ENCODE measurements at regions of chr2 and their contacts with region 1.

Region 1: DNA sequence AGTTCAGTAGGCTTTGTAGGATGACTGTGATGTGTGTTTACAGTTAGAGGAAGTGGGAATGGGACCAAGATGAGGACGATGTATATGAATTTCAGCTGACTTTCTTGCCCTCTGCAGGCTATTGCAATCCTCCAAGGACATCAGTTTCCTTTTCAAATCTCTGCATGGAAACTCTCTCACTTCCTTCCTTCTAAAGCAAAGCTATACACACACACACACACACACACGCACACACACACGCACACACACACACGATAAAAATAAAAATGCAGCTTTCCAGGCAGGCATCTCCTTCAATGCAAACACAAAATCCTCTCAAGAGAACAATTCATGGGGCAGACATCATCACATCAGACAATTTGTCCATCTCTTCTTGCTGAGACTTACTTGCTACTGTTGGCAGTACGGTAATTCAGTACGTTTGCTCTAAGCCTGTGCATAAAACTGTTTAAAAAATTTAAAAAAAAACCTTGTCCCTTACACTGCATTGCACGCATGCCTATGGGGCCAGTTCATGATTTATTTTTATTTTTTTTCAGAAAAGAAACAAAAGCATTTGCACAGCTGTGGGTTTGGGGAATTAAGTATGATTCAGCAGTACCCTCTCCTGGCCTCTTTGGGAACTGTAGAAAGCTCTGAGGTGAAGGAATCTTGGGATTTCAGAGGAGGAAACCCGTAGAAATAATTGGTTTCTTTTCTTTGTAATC is 27.1 kb upstream of the ICOS start:
- DNase-seq: peak; percentile 21
- H3K4me3 ChIP-seq: peak overlapping the region in 2 of 3 experiments; percentile 12 to 22
- H3K27ac ChIP-seq: no peak overlapping the region
- H3K4me1 ChIP-seq: no peaks in the 10 kb centered on the region
- H3K27me3 ChIP-seq: no peaks in the 10 kb centered on the region
- CTCF ChIP-seq: peak; percentile 77 to 81

Region 2: GRCh38 chr2:202577250-202578183 is 1331.9 kb before region 1 on chr2:
- CTCF ChIA-PET with region 1: no interaction called
- dilution Hi-C with region 1: no loop called
- in situ Hi-C with region 1: no loop called
- intact Hi-C with region 1: loop called (anchors 5 kb)
- DNase-seq: no peak
- H3K4me3 ChIP-seq: no peak overlapping the region
- H3K27ac ChIP-seq: no peak overlapping the region
- H3K4me1 ChIP-seq: no peaks in the 10 kb centered on the region
- H3K27me3 ChIP-seq: no peaks in the 10 kb centered on the region
- CTCF ChIP-seq: no peak

Region 3: GRCh38 chr2:202588647-202589581 is 1320.5 kb before region 1 on chr2:
- CTCF ChIA-PET with region 1: no interaction called
- dilution Hi-C with region 1: no loop called
- in situ Hi-C with region 1: no loop called
- intact Hi-C with region 1: loop called (anchors 5 kb)
- DNase-seq: peak; percentile 57
- H3K4me3 ChIP-seq: no peak overlapping the region
- H3K27ac ChIP-seq: no peak overlapping the region
- H3K4me1 ChIP-seq: peaks cover 3% of the 10 kb centered on the region
- H3K27me3 ChIP-seq: no peaks in the 10 kb centered on the region
- CTCF ChIP-seq: peak; percentile 89 to 94

Region 4: DNA sequence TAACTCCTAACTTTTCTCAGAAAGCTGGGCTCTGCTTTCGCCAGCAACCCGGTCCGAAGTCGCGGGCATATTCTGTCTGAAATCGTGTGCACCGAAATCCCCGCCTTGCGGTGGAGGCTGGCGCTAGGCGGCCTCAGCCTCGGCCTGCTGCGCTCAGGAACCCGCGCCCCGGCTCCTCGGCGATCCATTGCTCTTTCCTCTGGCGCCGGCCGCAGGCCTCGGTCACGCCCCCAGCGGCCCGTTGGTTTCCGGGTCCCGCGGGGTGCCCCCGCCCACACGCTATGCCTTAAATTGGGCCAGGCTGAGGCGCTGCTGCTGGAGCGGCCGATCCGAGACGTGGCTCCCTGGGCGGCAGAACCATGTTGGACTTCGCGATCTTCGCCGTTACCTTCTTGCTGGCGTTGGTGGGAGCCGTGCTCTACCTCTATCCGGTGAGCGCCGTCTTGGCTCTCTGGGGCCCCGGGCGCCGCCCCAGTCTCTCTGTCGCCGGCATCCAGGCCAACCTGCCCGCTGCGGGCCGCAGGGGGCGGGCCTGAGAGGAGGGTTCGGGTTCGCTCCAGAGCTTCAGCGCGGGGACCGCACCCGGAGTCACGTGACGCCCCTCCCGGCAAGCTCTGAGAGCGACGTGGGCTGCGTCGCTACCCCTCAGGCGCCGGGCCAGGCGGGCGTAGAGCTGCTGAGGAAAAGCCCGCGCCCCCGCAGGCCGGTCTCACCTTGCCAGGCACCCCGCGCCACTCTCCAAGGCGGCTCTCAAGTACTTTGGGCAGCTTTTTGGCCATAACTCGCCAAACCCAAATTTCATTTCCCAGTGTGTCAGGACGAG is 670.5 kb before region 1 on chr2 and contains the start of gene CYP20A1:
- CTCF ChIA-PET with region 1: no interaction called
- dilution Hi-C with region 1: no loop called
- in situ Hi-C with region 1: no loop called
- intact Hi-C with region 1: loop called (anchors 10 kb)
- DNase-seq: peak; percentile 97
- H3K4me3 ChIP-seq: peak within 1 kb of the TSS; percentile 68 to 93 (median 81)
- H3K27ac ChIP-seq: peak within 1 kb of the TSS; percentile 88
- H3K4me1 ChIP-seq: peaks cover 3% of the 10 kb centered on the region
- H3K27me3 ChIP-seq: no peaks in the 10 kb centered on the region
- CTCF ChIP-seq: peak in 1 of 2 donors; percentile 46
- total RNA-seq, gene CYP20A1: 17.6 to 25.0 TPM

Region 5: GRCh38 chr2:203453858-203454451 is 455.5 kb before region 1 on chr2:
- CTCF ChIA-PET with region 1: no interaction called
- dilution Hi-C with region 1: no loop called
- in situ Hi-C with region 1: no loop called
- intact Hi-C with region 1: loop called (anchors 10 kb)
- DNase-seq: peak; percentile 21
- H3K4me3 ChIP-seq: no peak overlapping the region
- H3K27ac ChIP-seq: no peak overlapping the region
- H3K4me1 ChIP-seq: peaks cover 5% of the 10 kb centered on the region
- H3K27me3 ChIP-seq: no peaks in the 10 kb centered on the region
- CTCF ChIP-seq: peak; percentile 72 to 76

Region 6: DNA sequence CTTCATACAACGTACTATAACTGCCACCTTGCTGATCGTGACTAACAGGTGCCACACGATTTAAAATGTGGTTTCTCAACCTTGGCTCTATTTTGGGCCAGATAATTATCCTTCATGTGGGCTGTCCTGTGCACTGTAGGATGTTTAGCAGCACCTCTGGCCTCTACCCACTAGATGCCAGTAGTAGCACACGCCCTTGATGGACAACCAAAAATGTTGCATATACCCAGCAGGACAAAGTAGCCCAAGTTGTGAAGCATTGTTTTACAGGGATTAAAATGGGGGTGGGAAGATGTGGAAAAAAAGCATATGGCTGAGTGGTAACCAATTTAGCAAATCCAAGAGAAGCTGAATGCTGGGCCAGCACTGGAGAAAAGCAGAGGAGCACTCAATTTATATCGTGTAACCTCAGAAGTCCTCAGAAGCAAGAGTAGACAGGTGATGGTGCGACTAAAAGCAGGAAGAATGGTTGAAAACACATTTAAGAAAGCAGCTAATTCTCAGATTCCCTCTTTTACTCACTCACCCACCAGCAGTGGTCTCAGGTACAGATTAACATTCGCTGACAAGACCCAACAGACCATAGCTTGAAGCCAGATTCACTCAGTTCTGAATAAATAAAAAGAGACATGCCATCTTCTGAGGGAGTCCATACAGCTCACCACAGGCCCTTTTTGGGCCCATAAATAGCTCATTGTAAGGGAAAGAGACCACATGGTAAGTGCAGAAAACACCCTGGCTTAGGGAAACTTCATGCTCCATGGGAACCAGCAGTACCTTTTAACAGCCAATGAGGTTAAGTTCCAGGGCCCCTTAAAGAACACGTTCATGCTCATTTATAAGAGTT is 424.9 kb before region 1 on chr2:
- CTCF ChIA-PET with region 1: no interaction called
- dilution Hi-C with region 1: no loop called
- in situ Hi-C with region 1: no loop called
- intact Hi-C with region 1: loop called (anchors 1 kb)
- DNase-seq: peak; percentile 29
- H3K4me3 ChIP-seq: no peak overlapping the region
- H3K27ac ChIP-seq: no peak overlapping the region
- H3K4me1 ChIP-seq: no peaks in the 10 kb centered on the region
- H3K27me3 ChIP-seq: no peaks in the 10 kb centered on the region
- CTCF ChIP-seq: peak; percentile 59 to 71

Region 7: GRCh38 chr2:203873921-203874631 is 35.3 kb before region 1 on chr2:
- CTCF ChIA-PET with region 1: no interaction called
- dilution Hi-C with region 1: no loop called
- in situ Hi-C with region 1: no loop called
- intact Hi-C with region 1: no loop called
- DNase-seq: peak; percentile 50
- H3K4me3 ChIP-seq: no peak overlapping the region
- H3K27ac ChIP-seq: no peak overlapping the region
- H3K4me1 ChIP-seq: peaks cover 11% of the 10 kb centered on the region
- H3K27me3 ChIP-seq: no peaks in the 10 kb centered on the region
- CTCF ChIP-seq: no peak

Region 8: GRCh38 chr2:203893401-203893800 is 16.0 kb before region 1 on chr2:
- CTCF ChIA-PET with region 1: no interaction called
- dilution Hi-C with region 1: no loop called
- in situ Hi-C with region 1: no loop called
- intact Hi-C with region 1: no loop called
- DNase-seq: peak; percentile 40
- H3K4me3 ChIP-seq: no peak overlapping the region
- H3K27ac ChIP-seq: no peak overlapping the region
- H3K4me1 ChIP-seq: peaks cover 15% of the 10 kb centered on the region
- H3K27me3 ChIP-seq: no peaks in the 10 kb centered on the region
- CTCF ChIP-seq: no peak

Region 9: GRCh38 chr2:203949228-203949627 is 39.8 kb after region 1 on chr2:
- CTCF ChIA-PET with region 1: no interaction called
- dilution Hi-C with region 1: no loop called
- in situ Hi-C with region 1: no loop called
- intact Hi-C with region 1: no loop called
- DNase-seq: peak; percentile 38
- H3K4me3 ChIP-seq: no peak overlapping the region
- H3K27ac ChIP-seq: no peak overlapping the region
- H3K4me1 ChIP-seq: peaks cover 6% of the 10 kb centered on the region
- H3K27me3 ChIP-seq: no peaks in the 10 kb centered on the region
- CTCF ChIP-seq: no peak

Region 10: GRCh38 chr2:204365811-204366210 is 456.4 kb after region 1 on chr2:
- CTCF ChIA-PET with region 1: no interaction called
- dilution Hi-C with region 1: no loop called
- in situ Hi-C with region 1: no loop called
- intact Hi-C with region 1: no loop called
- DNase-seq: no peak
- H3K4me3 ChIP-seq: no peak overlapping the region
- H3K27ac ChIP-seq: no peak overlapping the region
- H3K4me1 ChIP-seq: no peaks in the 10 kb centered on the region
- H3K27me3 ChIP-seq: peaks cover 2% of the 10 kb centered on the region
- CTCF ChIP-seq: no peak